ENCODE measurements at regions of chr11 and their contacts with region 1.

Region 1: GRCh38 chr11:47980245-47981049 is at the start of gene PTPRJ:
- DNase-seq: no peak
- H3K4me3 ChIP-seq: peak within 1 kb of the TSS; percentile 65
- CTCF ChIP-seq: no peak

Region 2: GRCh38 chr11:47992959-47993820 is 12.7 kb after region 1 on chr11:
- CTCF ChIA-PET with region 1: interaction called, 15 read pairs
- POLR2A ChIA-PET with region 1: no interaction called
- DNase-seq: no peak
- H3K4me3 ChIP-seq: no peak overlapping the region
- CTCF ChIP-seq: no peak

Region 3: GRCh38 chr11:48073031-48073861 is 92.8 kb after region 1 on chr11:
- CTCF ChIA-PET with region 1: no interaction called
- POLR2A ChIA-PET with region 1: no interaction called
- DNase-seq: no peak
- H3K4me3 ChIP-seq: no peak overlapping the region
- CTCF ChIP-seq: no peak

Region 4: GRCh38 chr11:48141475-48142122 is 161.2 kb after region 1 on chr11:
- CTCF ChIA-PET with region 1: no interaction called
- POLR2A ChIA-PET with region 1: no interaction called
- DNase-seq: no peak
- H3K4me3 ChIP-seq: no peak overlapping the region
- CTCF ChIP-seq: no peak